ENCODE measurements at regions of chr2 and their contacts with region 1.

Region 1: GRCh38 chr2:40115749-40116293 is 336.1 kb downstream of the SLC8A1 start:
- DNase-seq: no peak
- ATAC-seq: no peak
- H3K4me3 ChIP-seq: no peak overlapping the region
- H3K27ac ChIP-seq: no peak overlapping the region
- H3K4me1 ChIP-seq: peaks cover 0 to 24% (median 0%) of the 10 kb centered on the region in 9 donors
- H3K27me3 ChIP-seq: no peaks in the 10 kb centered on the region
- CTCF ChIP-seq: no peak

Region 2: DNA sequence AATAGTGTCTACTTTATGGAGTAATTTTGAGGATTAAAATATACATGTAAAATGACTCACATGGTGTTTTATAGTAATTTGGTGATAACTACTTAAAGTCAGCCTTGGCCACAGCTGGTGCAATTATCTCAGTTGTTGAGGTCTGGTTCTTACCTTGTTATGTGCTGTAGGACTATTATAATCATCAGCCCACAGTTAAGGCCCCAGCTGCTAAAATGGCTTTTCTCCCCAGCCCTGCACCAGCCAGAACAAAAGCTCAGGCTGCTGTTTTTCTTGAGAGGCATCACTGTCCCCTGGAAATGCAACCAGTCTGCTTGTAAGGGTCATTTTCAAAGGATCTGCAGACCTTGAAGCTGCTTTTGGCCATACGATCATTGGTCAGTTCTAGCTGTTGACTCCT is 53.4 kb before region 1 on chr2:
- intact Hi-C with region 1: loop called in 1 of 10 experiments (anchors 2 kb)
- DNase-seq: no peak
- ATAC-seq: no peak
- H3K4me3 ChIP-seq: no peak overlapping the region
- H3K27ac ChIP-seq: no peak overlapping the region
- H3K4me1 ChIP-seq: no peaks in the 10 kb centered on the region
- H3K27me3 ChIP-seq: no peaks in the 10 kb centered on the region
- CTCF ChIP-seq: no peak

Measured in heart right ventricle (tissue), 16 donors.